ENCODE measurements at regions of chr10 and their contacts with region 1.

Region 1: GRCh38 chr10:43105102-43105785 is 28.4 kb downstream of the RET start:
- DNase-seq: peak; percentile 85
- ATAC-seq: peak; percentile 97
- H3K4me3 Mint-ChIP-seq: peak overlapping the region; percentile 59
- H3K27ac Mint-ChIP-seq: no peak overlapping the region
- H3K4me1 Mint-ChIP-seq: peaks cover 4% of the 10 kb centered on the region
- H3K27me3 Mint-ChIP-seq: peaks cover 15% of the 10 kb centered on the region
- CTCF ChIP-seq: peak; percentile 100

Region 2: DNA sequence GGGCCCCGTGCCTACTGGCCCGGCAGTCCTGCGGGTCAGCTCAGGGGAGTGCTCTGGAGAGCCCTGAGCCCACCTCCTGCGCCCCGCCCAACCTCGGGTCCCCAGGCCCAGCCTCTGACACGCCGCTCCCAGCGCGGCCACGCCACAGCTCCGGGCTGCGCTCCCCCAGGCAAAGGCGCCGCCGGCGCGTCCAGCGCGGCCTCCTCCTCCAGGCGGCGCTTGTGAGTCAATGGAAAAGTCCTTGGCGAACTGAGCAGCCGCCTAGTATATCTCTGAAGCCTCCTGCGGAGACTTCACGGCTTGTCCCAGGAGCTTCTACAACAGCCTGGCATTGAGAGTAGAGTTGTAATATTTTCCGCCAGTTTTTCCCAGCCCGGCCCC is 352.1 kb before region 1 on chr10:
- CTCF ChIA-PET with region 1: interaction called, 4 read pairs
- POLR2A ChIA-PET with region 1: no interaction called
- intact Hi-C with region 1: loop called (anchors 10 kb)
- DNase-seq: peak; percentile 74
- ATAC-seq: peak; percentile 83
- H3K4me3 Mint-ChIP-seq: peak overlapping the region; percentile 66
- H3K27ac Mint-ChIP-seq: no peak overlapping the region
- H3K4me1 Mint-ChIP-seq: peaks cover 7% of the 10 kb centered on the region
- H3K27me3 Mint-ChIP-seq: peaks cover 57% of the 10 kb centered on the region
- CTCF ChIP-seq: peak; percentile 68

Region 3: GRCh38 chr10:42866115-42866995 is 238.9 kb before region 1 on chr10:
- CTCF ChIA-PET with region 1: interaction called, 5 read pairs
- POLR2A ChIA-PET with region 1: no interaction called
- intact Hi-C with region 1: loop called (anchors 5 kb)
- DNase-seq: peak; percentile 60
- ATAC-seq: peak; percentile 69
- H3K4me3 Mint-ChIP-seq: no peak overlapping the region
- H3K27ac Mint-ChIP-seq: no peak overlapping the region
- H3K4me1 Mint-ChIP-seq: peaks cover 1% of the 10 kb centered on the region
- H3K27me3 Mint-ChIP-seq: peaks cover 29% of the 10 kb centered on the region
- CTCF ChIP-seq: peak; percentile 69

Region 4: DNA sequence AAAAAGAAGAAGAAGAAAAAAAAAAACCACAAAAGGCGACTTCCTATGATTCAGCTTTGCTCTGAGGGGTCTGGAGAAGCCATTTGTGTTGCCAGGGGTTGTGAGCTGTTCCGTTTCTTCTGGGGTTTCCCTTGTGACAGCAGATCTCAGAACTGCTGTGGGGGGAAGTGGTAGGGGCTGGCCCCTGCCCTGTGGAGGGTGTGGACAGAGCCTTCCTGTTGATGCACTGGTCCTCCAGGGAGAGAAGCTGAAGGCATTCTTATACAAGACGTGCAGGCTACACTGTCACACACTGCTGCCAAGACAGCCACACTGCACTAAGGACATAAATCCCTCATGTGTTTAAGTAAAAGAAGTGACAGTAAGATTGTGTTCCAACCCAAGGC is 15.7 kb after region 1 on chr10:
- CTCF ChIA-PET with region 1: no interaction called
- POLR2A ChIA-PET with region 1: no interaction called
- intact Hi-C with region 1: no loop called
- DNase-seq: peak; percentile 88
- ATAC-seq: peak; percentile 99
- H3K4me3 Mint-ChIP-seq: peak overlapping the region; percentile 13
- H3K27ac Mint-ChIP-seq: peak overlapping the region; percentile 89
- H3K4me1 Mint-ChIP-seq: peaks cover 24% of the 10 kb centered on the region
- H3K27me3 Mint-ChIP-seq: no peaks in the 10 kb centered on the region
- CTCF ChIP-seq: no peak

Measured in activated CD8-positive, alpha-beta T cell treated with anti-CD3 and anti-CD28 coated beads for 36 hours (primary cell).